WTC11 (cell line): ENCODE measurements at regions of chr15 and their contacts with region 1.

Region 1: GRCh38 chr15:49832511-49832910 is 211.7 kb downstream of the DTWD1 start:
- DNase-seq: peak; percentile 53
- ATAC-seq: peak; percentile 100
- H3K4me3 Mint-ChIP-seq: no peak overlapping the region
- H3K27ac Mint-ChIP-seq: peak overlapping the region; percentile 17; the same call in 1 of the 2 replicates
- H3K4me1 Mint-ChIP-seq: peaks cover 6% of the 10 kb centered on the region
- H3K27me3 Mint-ChIP-seq: peaks cover 5% of the 10 kb centered on the region
- CTCF ChIP-seq: peak; percentile 38

Region 2: DNA sequence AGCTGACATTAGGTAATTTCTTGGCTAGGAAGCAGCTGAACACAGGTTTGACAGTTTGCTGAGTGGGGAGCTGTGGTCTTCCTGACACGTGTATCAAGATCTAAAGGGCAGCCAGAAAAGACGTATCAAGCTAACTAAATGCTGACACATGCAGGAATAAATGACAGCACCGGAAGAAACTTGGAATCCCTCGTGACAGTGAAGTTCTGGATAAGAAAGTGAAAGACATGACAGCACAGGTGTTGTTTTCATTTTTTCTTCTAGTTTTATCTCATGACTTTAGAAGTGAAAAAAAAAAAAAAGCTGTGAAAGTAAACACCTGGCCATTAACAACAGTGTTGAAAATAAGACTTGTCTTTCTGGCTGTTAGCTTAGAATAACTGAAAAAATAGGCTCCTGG is 360.8 kb before region 1 on chr15:
- CTCF ChIA-PET with region 1: interaction called, 11 read pairs
- POLR2A ChIA-PET with region 1: no interaction called
- DNase-seq: no peak
- ATAC-seq: no peak
- H3K4me3 Mint-ChIP-seq: no peak overlapping the region
- H3K27ac Mint-ChIP-seq: no peak overlapping the region
- H3K4me1 Mint-ChIP-seq: no peaks in the 10 kb centered on the region
- H3K27me3 Mint-ChIP-seq: no peaks in the 10 kb centered on the region
- CTCF ChIP-seq: no peak

Region 3: GRCh38 chr15:50003786-50004334 is 171.3 kb after region 1 on chr15:
- CTCF ChIA-PET with region 1: interaction called, 15 read pairs
- POLR2A ChIA-PET with region 1: no interaction called
- DNase-seq: peak; percentile 94
- ATAC-seq: peak; percentile 99
- H3K4me3 Mint-ChIP-seq: peak overlapping the region; percentile 48
- H3K27ac Mint-ChIP-seq: peak overlapping the region; percentile 86
- H3K4me1 Mint-ChIP-seq: peaks cover 24% of the 10 kb centered on the region
- H3K27me3 Mint-ChIP-seq: no peaks in the 10 kb centered on the region
- CTCF ChIP-seq: peak; percentile 56